ENCODE measurements at regions of chr11 and their contacts with region 1.

Region 1: GRCh38 chr11:134139873-134140331 is 71.0 kb downstream of the JAM3 start:
- DNase-seq: peak; percentile 22 to 74 (median 45)
- ATAC-seq: peak; percentile 73
- H3K4me3 ChIP-seq: no peak overlapping the region
- H3K4me3 Mint-ChIP-seq: no peak overlapping the region
- H3K27ac ChIP-seq: no peak overlapping the region
- H3K27ac Mint-ChIP-seq: no peak overlapping the region
- H3K4me1 ChIP-seq: no peaks in the 10 kb centered on the region
- H3K4me1 Mint-ChIP-seq: no peaks in the 10 kb centered on the region
- H3K27me3 ChIP-seq: no peaks in the 10 kb centered on the region
- H3K27me3 Mint-ChIP-seq: no peaks in the 10 kb centered on the region
- CTCF ChIP-seq: peak; percentile 63

Region 2: DNA sequence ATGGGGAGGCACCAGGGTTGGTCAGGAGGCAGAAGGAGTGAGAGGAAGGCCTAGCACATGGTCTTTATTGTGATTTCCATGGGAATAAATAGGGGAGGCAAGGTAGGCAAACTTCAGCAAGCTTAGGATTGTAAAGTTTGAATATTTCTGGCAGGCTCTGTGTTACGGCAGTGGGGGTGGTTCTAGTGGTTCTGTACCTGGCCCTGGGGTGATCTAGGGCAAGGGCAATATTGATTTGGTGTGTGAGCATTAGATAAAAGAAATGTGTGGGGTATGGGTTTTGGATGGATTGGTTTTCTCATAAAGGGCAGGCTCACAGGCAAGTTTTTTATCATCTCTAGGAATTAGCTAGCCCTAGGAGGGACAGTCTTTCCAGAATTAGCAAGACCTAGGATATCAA is 1191.7 kb before region 1 on chr11:
- CTCF ChIA-PET with region 1: no interaction called
- POLR2A ChIA-PET with region 1: no interaction called
- intact Hi-C with region 1: no loop called
- DNase-seq: no peak
- ATAC-seq: no peak
- H3K4me3 ChIP-seq: no peak overlapping the region
- H3K4me3 Mint-ChIP-seq: no peak overlapping the region
- H3K27ac ChIP-seq: no peak overlapping the region
- H3K27ac Mint-ChIP-seq: no peak overlapping the region
- H3K4me1 ChIP-seq: no peaks in the 10 kb centered on the region
- H3K4me1 Mint-ChIP-seq: peaks cover 2% of the 10 kb centered on the region
- H3K27me3 ChIP-seq: no peaks in the 10 kb centered on the region
- H3K27me3 Mint-ChIP-seq: peaks cover 16% of the 10 kb centered on the region
- CTCF ChIP-seq: no peak

Region 3: GRCh38 chr11:133947321-133947756 is 192.6 kb before region 1 on chr11:
- CTCF ChIA-PET with region 1: interaction called, 11 read pairs
- POLR2A ChIA-PET with region 1: no interaction called
- intact Hi-C with region 1: no loop called
- DNase-seq: peak; percentile 41 to 81 (median 68)
- ATAC-seq: peak; percentile 32
- H3K4me3 ChIP-seq: peak overlapping the region in 1 of 2 experiments; percentile 7
- H3K4me3 Mint-ChIP-seq: peak overlapping the region; percentile 60
- H3K27ac ChIP-seq: no peak overlapping the region
- H3K27ac Mint-ChIP-seq: peak overlapping the region; percentile 79
- H3K4me1 ChIP-seq: peaks cover 58% of the 10 kb centered on the region
- H3K4me1 Mint-ChIP-seq: peaks cover 51% of the 10 kb centered on the region
- H3K27me3 ChIP-seq: peaks cover 0 to 10% of the 10 kb centered on the region in 2 experiments
- H3K27me3 Mint-ChIP-seq: no peaks in the 10 kb centered on the region
- CTCF ChIP-seq: peak; percentile 24

Region 4: GRCh38 chr11:133966921-133967598 is 172.8 kb before region 1 on chr11:
- CTCF ChIA-PET with region 1: interaction called, 5 read pairs
- POLR2A ChIA-PET with region 1: no interaction called
- intact Hi-C with region 1: loop called (anchors 1 to 2 kb)
- DNase-seq: peak; percentile 47 to 87 (median 74)
- ATAC-seq: peak; percentile 93
- H3K4me3 ChIP-seq: peak overlapping the region; percentile 42 to 55
- H3K4me3 Mint-ChIP-seq: peak overlapping the region; percentile 89
- H3K27ac ChIP-seq: peak overlapping the region in 1 of 2 experiments; percentile 50
- H3K27ac Mint-ChIP-seq: peak overlapping the region; percentile 87
- H3K4me1 ChIP-seq: peaks cover 15% of the 10 kb centered on the region
- H3K4me1 Mint-ChIP-seq: peaks cover 13% of the 10 kb centered on the region
- H3K27me3 ChIP-seq: no peaks in the 10 kb centered on the region
- H3K27me3 Mint-ChIP-seq: no peaks in the 10 kb centered on the region
- CTCF ChIP-seq: peak; percentile 65

Region 5: DNA sequence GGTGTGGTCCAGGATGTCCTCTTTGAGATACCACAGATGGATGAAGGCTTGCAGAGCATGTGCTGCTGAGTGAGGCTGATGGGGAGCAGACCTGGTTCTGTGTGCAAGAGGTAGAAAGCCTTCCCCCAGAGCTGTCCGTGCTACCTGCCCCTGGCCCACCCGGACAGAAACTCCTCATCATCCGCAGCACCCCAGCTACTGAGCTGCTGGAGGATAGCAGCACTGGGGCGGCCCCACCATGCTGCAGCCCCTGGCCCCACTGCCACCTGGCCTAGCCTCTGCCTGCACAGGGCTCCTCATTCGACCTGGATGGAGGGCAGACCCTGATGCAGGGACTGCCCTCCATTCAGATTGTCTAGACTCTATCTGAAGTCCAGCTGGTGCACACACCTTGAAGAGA is 33.4 kb after region 1 on chr11:
- CTCF ChIA-PET with region 1: no interaction called
- POLR2A ChIA-PET with region 1: no interaction called
- intact Hi-C with region 1: no loop called
- DNase-seq: no peak
- ATAC-seq: no peak
- H3K4me3 ChIP-seq: no peak overlapping the region
- H3K4me3 Mint-ChIP-seq: no peak overlapping the region
- H3K27ac ChIP-seq: no peak overlapping the region
- H3K27ac Mint-ChIP-seq: no peak overlapping the region
- H3K4me1 ChIP-seq: no peaks in the 10 kb centered on the region
- H3K4me1 Mint-ChIP-seq: no peaks in the 10 kb centered on the region
- H3K27me3 ChIP-seq: no peaks in the 10 kb centered on the region
- H3K27me3 Mint-ChIP-seq: no peaks in the 10 kb centered on the region
- CTCF ChIP-seq: no peak